Activated CD8-positive, alpha-beta memory T cell treated with anti-CD3 and anti-CD28 coated beads, Interleukin-2, amount 10 ng/mL, durations not matched to agents 7 days and 5 days (primary cell): ENCODE measurements at regions of chr17 and their contacts with region 1.

Region 1: DNA sequence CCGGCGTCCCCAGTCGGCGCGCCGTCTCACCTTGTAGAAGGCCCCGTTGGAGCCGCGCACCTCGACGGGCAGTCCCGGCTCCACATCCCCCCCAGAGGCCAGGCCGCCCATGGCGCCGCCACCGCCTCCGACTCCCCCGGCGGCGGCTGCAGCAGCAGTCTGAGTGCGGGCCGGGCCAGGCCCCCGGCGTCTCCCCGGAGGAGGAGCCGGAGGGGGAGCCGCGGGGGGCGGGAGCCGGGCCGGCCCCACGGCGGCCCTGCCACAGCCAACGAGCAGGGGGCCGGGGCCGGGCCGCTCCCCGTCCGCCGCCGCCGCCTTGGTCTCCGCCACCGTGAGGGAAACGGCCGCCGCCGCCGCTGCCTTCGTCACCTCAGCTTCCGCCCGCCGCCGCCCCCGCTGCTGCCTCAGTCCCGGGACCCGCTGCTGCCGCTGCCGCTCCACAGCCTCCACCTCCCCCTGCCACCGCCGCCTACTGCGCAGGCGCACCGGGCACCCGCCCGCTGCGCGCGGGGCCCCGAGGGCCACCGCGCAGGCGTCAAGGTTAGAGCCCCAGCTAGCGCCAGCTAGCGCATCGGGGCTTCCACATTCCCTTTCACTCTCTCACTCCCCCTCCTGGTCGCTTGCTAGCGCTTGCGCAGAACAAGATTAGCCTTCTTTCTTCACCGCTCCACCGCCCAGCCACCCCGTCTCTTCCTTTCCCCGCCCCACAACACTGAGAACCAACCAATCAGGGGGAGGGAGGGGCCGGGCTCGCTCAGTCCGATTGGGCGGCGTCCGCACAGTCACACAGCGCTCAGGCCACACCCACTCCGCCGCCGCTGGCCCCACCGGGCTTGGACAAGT is at the start of gene FXR2:
- DNase-seq: peak; percentile 100
- ATAC-seq: peak; percentile 95
- H3K4me3 Mint-ChIP-seq: peak within 1 kb of the TSS; percentile 77
- H3K27ac Mint-ChIP-seq: peak within 1 kb of the TSS; percentile 87
- H3K4me1 Mint-ChIP-seq: peaks cover 30% of the 10 kb centered on the region
- H3K27me3 Mint-ChIP-seq: no peaks in the 10 kb centered on the region
- total RNA-seq, gene FXR2: 30.7 to 40.5 TPM

Region 2: DNA sequence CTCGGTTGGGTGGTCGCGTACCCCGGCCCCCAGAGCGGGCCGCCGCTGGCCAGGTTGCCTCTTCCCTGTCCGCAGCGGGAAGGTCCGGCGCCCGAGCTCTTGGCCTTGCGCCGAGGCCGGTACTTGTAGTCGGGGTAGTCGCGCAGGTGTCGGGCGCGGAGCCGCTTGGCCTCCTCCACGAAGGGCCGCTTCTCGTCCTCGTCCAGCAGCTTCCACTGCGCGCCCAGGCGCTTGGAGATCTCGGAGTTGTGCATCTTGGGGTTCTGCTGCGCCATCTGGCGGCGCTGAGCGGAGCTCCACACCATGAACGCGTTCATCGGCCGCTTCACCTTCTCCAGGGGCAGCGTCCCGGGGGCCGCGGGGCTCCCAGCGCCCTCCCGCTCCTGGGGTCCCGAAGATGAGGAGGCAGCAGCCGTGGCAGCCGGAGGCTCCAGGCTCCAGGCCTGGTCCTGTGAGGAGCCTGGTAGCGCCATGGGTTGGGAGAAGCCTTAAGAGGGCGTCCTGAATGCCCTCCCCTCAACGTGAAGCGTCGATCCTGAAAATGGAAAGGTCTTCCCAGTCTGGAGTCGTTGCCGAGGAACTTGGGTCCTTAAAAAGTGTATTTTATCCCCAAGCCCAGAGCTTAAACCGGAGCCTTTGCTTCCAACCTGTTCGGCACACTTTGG is 25.3 kb before region 1 on chr17:
- CTCF ChIA-PET with region 1: interaction called, 14 read pairs
- DNase-seq: peak; percentile 73
- ATAC-seq: peak; percentile 77
- H3K4me3 Mint-ChIP-seq: no peak overlapping the region
- H3K27ac Mint-ChIP-seq: no peak overlapping the region
- H3K4me1 Mint-ChIP-seq: peaks cover 17% of the 10 kb centered on the region
- H3K27me3 Mint-ChIP-seq: no peaks in the 10 kb centered on the region

Region 3: DNA sequence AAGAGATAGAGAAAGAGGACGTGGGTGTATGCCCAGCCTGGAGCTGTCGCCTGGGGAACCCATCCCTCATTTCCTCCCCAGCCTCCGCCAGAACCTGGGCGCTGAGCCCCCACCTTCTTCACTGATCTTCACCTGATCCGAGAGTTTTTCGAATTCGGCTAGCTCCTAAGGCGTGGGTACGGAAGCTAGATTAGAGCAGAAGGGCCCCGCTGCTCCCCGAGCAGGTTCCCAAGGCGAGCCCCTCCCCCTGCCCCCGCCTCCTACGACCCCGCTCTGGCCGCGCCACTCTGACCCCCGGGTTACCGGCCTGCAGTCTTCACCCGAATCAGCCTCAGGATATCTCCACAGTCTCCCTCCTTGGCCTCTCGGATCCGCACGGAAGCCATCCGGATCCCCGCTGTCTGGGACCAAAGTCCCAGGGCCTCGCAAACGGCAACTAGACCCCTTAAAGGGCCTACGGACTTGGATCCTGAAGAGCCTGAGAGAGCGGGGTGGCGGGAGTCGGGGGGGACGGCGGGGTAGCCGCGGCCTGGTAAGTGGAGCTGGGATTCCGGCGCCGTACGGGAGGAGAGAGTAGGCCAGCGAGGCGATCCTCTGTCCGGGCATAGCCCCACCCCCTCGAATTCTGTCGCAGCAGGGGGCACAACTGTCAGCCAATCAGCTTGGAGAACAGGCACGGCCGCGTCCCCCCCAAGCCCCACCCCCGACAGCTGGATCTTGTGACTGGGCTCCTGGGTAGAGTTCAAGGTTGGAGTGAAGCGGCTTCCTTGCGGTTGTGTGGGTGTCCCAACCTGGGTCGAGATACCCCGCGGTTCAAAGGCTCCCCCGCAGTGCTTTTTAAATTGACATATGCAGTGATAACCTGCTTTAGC is 12.8 kb after region 1 on chr17 and contains the start of gene SAT2:
- CTCF ChIA-PET with region 1: interaction called, 15 read pairs
- DNase-seq: peak; percentile 95
- ATAC-seq: peak; percentile 98
- H3K4me3 Mint-ChIP-seq: peak within 1 kb of the TSS; percentile 86
- H3K27ac Mint-ChIP-seq: peak within 1 kb of the TSS; percentile 70
- H3K4me1 Mint-ChIP-seq: peaks cover 14% of the 10 kb centered on the region
- H3K27me3 Mint-ChIP-seq: no peaks in the 10 kb centered on the region
- total RNA-seq, gene SAT2: 21.5 to 28.0 TPM

Region 4: DNA sequence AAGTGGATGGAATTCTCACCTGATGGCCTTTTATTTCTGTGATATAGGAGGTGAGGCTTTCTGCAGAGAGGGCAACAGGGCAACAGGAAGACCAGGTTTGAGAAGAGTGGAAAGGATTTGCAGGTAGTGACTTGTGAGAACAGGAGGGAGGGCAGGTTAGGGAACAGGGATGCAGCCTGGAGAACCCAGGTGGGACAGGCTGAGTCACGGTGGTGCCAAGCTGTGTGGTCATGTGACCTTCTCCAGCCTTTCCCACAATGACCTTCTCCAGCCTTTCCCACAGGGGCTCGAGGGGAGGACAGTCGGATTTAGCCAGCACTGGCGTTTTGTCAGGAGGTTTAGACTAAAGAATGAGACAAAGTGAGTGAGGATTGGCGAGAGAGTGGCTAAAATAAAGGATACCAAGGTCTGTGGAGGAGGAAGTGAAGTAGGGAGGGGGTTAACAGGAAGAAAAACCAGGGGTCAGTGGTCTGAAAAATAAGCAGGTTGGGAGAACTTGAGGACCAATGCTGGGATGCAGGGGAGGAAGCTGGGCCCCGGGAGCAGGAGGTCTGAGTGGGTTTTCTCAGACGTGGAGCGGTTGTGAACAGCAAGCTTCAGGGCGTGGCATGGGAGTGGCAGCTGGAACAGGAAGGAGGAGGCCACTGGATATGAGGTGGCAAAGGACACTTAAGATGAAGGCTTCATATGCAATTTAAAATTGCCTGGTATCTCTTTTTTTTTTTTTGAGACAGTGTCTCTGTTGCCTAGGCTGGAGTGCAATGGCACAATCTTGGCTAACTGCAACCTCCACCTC is 140.7 kb after region 1 on chr17:
- CTCF ChIA-PET with region 1: no interaction called
- DNase-seq: no peak
- ATAC-seq: no peak
- H3K4me3 Mint-ChIP-seq: no peak overlapping the region
- H3K27ac Mint-ChIP-seq: no peak overlapping the region
- H3K4me1 Mint-ChIP-seq: peaks cover 4% of the 10 kb centered on the region
- H3K27me3 Mint-ChIP-seq: peaks cover 9% of the 10 kb centered on the region